ENCODE measurements at regions of chr6 and their contacts with region 1.

Region 1: GRCh38 chr6:89562118-89562973 is 76.2 kb downstream of the LYRM2 start:
- DNase-seq: no peak
- ATAC-seq: peak; percentile 44
- H3K4me3 ChIP-seq: peak overlapping the region; percentile 59 to 84
- H3K27ac ChIP-seq: peak overlapping the region; percentile 50 to 83
- H3K4me1 ChIP-seq: peaks cover 12 to 13% of the 10 kb centered on the region in 2 donors
- H3K27me3 ChIP-seq: no peaks in the 10 kb centered on the region

Region 2: DNA sequence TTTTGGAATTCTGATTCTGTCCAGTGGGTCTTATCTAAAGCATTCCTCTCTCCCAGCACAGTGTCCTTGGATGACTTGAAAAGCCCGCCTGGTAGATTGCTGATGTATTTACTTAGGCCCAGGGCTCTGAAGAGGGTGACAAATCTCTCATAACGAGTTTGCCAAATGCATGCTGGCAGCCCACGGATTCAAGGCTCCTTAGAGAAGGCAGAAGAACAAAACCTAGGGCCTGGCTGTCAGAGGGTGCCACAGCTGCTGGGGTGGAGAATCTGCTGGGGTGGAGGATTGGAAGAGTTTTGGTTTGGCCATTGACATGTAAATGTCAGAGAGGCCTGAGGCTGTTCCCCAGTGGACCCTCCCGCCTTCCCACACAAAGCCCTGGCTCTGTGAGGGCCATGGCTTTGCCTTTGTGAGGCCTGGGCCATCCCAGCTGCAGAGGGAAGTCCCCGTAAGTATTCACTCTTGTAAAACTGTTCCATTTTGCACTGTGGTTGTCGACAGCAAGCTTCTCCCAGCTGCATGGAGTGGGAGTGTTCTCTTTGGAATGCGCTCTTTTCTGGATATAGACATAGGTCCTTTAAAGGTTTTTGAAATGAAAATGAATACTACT is 79.1 kb before region 1 on chr6:
- intact Hi-C with region 1: loop called in 1 of 2 experiments (anchors 5 kb)
- DNase-seq: peak; percentile 65 to 80
- ATAC-seq: peak; percentile 53
- H3K4me3 ChIP-seq: peak overlapping the region in 1 of 2 donors; percentile 19
- H3K27ac ChIP-seq: peak overlapping the region; percentile 19 to 87
- H3K4me1 ChIP-seq: peaks cover 2 to 9% of the 10 kb centered on the region in 2 donors
- H3K27me3 ChIP-seq: no peaks in the 10 kb centered on the region

Region 3: DNA sequence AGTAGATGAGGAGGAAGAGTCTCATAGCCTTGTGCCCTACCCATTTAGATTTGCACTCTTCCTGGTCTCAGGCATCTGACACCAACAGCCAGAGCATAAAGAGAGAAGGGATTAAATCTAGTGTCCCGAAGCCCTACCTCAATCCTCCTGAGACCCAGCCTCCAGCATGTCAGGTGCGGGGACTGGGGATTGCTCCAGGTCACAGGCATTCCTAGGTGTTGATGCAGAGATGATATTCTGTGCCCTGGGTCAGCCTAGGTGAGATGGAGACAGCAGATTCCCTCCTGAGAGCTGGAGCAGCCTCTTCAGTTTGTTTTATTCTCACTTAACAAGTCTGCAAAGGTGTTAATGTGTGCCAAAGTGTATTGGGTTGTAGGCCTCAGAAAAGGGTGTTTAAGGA is 39.6 kb before region 1 on chr6:
- intact Hi-C with region 1: loop called in 1 of 2 experiments (anchors 5 kb)
- DNase-seq: no peak
- ATAC-seq: no peak
- H3K4me3 ChIP-seq: no peak overlapping the region
- H3K27ac ChIP-seq: no peak overlapping the region
- H3K4me1 ChIP-seq: peaks cover 3 to 18% of the 10 kb centered on the region in 2 donors
- H3K27me3 ChIP-seq: no peaks in the 10 kb centered on the region

Measured in aorta (tissue), 5 donors.